GM18951 (cell line): ENCODE measurements at regions of chr1 and their contacts with region 1.

Region 1: DNA sequence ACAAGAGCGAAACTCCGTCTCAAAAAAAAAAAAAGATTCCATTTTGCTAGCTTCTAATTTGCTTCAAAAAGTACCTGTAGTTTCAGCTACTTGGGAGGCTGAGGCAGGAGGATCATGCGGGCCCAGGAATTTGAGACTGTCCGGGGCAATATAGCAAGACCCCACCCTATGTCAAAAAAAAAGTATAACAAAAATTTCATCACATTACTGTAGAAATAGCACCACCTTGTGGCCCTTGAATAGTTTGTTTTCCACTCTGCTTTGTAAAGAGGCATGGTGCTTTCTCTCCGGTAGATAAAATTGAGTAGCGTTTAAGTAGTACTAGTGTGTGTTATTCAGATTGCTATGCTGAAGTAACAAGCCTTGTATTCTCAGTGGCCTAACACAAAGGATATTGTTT is 18.2 kb upstream of the MSTO1 start:
- POLR2A ChIP-seq: no peak

Region 2: DNA sequence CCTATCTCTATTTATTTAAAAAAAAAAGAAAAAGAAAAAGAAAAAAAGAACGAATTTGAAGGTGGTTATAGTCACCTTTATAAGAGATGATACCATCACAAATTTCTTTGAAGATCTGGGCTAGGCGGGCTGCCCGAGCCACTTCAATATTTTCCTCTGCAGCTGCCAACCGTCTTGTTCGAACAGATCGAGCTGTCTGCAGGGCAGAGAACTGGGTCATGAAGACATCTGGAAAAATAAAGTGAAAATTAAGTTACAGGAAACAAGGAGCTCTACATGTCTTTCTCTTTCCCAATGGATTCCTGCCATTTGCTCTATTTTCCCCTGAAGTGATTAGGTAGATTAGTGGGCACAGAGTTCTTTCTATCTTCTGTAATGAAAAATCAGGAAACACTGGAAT is 239.1 kb before region 1 on chr1:
- in situ Hi-C with region 1: loop called (anchors 25 kb)
- POLR2A ChIP-seq: no peak

Region 3: DNA sequence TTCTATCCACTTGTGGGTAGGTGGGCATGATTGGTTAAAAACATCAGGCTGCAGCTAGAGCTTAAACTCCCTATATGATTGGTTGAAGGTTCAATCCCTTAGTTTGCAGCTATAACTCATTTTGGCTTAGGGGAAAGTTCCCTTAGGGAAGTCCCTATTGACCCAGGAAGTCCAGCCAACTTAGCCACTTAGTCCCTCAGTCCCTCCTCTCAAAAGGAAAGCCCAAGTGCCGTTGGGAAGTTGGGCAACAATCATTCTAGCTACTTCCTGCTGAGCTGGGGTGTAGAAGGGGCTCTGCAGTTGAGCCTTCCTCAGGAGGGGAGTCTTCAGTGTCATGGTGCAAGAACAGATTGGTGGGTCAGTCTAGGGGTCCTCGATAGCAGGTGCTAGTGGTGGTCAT is 30.4 kb after region 1 on chr1:
- in situ Hi-C with region 1: no loop called
- POLR2A ChIP-seq: no peak

Region 4: GRCh38 chr1:155834296-155834926 is 242.6 kb after region 1 on chr1:
- in situ Hi-C with region 1: no loop called
- POLR2A ChIP-seq: no peak